Left ventricle myocardium inferior (tissue), 1 donor: ENCODE measurements at regions of chr2 and their contacts with region 1.

Region 1: GRCh38 chr2:181742922-181743722 is 62.8 kb upstream of the NEUROD1 start:
- DNase-seq: no peak
- H3K4me3 ChIP-seq: no peak overlapping the region
- H3K27ac ChIP-seq: no peak overlapping the region
- H3K4me1 ChIP-seq: peaks cover 8% of the 10 kb centered on the region
- H3K27me3 ChIP-seq: no peaks in the 10 kb centered on the region
- CTCF ChIP-seq: peak; percentile 76

Region 2: GRCh38 chr2:181904022-181904632 is 161.0 kb after region 1 on chr2:
- intact Hi-C with region 1: loop called (anchors 5 kb)
- DNase-seq: no peak
- H3K4me3 ChIP-seq: no peak overlapping the region
- H3K27ac ChIP-seq: no peak overlapping the region
- H3K4me1 ChIP-seq: peaks cover 74% of the 10 kb centered on the region
- H3K27me3 ChIP-seq: no peaks in the 10 kb centered on the region
- CTCF ChIP-seq: peak; percentile 68

Region 3: DNA sequence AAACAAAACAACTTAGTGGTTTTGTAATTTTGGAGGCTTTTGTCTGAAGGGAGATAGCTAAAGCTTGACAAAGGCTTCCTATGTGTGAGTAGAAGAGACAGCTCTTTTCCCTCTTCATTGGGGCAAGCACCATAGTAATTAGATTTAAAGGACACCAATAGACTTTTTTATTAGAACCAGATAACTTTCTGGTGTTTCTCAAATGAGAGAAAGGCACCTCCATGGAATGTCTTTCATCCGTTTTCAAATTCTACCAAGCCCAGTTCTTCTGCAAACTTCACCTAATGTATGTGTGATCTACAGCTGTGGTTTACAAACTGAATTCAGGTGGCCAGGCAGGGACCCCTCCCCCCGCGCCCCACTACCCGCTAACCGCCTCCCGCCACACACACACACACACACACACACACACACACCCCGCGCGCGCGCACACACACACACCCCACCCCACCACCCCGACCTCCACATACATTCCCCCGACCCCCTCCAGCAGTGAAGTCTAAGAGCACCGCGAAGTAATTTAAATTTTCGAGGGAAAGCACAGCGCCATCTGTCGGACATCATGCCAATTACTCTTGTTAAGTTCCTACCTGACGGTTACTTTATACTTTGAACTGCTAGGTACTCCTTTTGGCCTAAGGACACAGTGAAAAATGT is 210.9 kb after region 1 on chr2:
- intact Hi-C with region 1: loop called (anchors 10 kb)
- DNase-seq: peak; percentile 25
- H3K4me3 ChIP-seq: peak overlapping the region; percentile 48
- H3K27ac ChIP-seq: no peak overlapping the region
- H3K4me1 ChIP-seq: no peaks in the 10 kb centered on the region
- H3K27me3 ChIP-seq: no peaks in the 10 kb centered on the region
- CTCF ChIP-seq: peak; percentile 67

Region 4: DNA sequence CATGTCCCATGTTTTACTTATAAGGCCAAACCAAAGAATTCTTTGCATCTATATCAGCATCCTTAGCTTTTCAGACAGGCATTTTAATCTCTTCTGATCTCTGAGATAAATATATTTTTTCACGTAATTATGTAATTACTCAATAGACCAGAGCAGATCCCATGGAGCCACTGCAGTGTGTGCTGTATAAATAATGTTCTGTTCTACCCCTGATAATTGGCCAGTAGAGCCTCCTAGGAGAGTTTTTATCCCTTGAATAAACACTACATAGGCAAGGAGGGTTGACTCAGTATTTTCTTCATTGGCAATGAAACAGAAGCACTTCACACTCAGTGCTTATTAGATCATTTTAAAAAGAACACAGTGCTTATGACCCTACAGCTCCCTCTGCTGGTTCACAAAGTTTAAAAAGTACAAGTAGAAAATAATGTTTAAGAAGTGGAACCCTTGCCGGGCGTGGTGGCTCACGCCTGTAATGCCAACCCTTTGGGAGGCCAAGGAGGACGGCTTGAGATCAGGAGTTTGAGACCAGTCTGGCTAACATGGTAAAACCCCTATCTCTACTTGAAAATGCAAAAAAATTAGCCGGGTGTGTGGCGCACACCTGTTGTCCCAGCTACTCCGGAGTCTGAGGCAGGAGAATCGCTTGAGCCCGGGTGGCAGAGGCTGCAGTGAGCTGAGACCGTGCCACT is 334.5 kb after region 1 on chr2:
- intact Hi-C with region 1: loop called (anchors 5 kb)
- DNase-seq: peak; percentile 17
- H3K4me3 ChIP-seq: no peak overlapping the region
- H3K27ac ChIP-seq: peak overlapping the region; percentile 24
- H3K4me1 ChIP-seq: peaks cover 8% of the 10 kb centered on the region
- H3K27me3 ChIP-seq: no peaks in the 10 kb centered on the region
- CTCF ChIP-seq: peak; percentile 77

Region 5: GRCh38 chr2:182650704-182651103 is 907.6 kb after region 1 on chr2:
- intact Hi-C with region 1: loop called (anchors 10 kb)
- DNase-seq: no peak
- H3K4me3 ChIP-seq: no peak overlapping the region
- H3K27ac ChIP-seq: no peak overlapping the region
- H3K4me1 ChIP-seq: peaks cover 12% of the 10 kb centered on the region
- H3K27me3 ChIP-seq: no peaks in the 10 kb centered on the region
- CTCF ChIP-seq: peak; percentile 69